Caco-2 (cell line): ENCODE measurements at regions of chr19 and their contacts with region 1.

Region 1: DNA sequence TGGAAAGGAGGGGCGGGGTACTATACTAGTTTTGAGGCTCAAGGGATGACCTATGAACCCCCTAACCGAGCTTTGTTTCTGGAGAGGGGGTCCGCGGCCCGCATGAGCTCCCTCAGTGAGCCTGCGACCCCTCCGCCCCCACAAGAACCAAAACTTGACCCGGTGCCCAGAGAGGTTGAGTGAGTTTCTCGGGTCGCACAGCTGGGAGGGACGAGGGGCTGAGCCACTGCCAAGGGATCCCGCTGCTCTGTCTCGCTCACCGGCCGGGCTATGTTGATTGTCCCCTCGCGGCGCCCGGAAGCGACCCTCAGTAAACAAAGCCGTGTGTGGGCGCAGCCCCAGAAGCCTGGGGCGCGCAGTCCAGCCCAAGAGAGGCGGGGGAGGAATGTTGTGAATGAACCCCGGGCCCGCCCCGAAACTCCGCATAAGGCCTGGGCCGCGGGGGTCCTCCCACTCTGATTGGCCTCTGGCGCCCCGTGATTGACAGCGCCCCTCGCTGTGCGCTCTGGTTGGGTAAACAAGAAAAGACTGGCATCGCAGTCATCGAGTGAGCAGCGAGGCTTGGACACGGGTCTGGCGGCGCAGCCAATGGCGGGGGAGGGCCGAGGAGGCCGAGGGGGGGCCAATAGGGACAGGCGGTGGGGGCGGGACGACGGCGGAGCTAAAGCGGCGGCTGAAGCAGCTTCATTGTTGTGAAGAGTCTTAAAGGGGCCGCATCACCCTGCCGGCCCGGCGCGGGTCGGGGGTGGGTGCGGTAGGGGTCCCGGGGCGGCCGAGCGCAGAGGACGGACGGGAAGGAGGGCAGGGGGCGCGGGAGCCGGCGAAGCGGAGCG is at the start of gene ZSWIM4:
- DNase-seq: peak; percentile 98 to 99
- H3K4me3 ChIP-seq: peak within 1 kb of the TSS; percentile 80
- H3K4me3 Mint-ChIP-seq: peak within 1 kb of the TSS; percentile 97
- H3K27ac Mint-ChIP-seq: peak within 1 kb of the TSS; percentile 99
- H3K4me1 ChIP-seq: no peaks in the 10 kb centered on the region
- H3K4me1 Mint-ChIP-seq: peaks cover 9% of the 10 kb centered on the region
- H3K27me3 ChIP-seq: no peaks in the 10 kb centered on the region
- H3K27me3 Mint-ChIP-seq: no peaks in the 10 kb centered on the region
- CTCF ChIP-seq: no peak
- total RNA-seq, gene ZSWIM4: 4.0 and 5.7 TPM in 2 replicates

Region 2: DNA sequence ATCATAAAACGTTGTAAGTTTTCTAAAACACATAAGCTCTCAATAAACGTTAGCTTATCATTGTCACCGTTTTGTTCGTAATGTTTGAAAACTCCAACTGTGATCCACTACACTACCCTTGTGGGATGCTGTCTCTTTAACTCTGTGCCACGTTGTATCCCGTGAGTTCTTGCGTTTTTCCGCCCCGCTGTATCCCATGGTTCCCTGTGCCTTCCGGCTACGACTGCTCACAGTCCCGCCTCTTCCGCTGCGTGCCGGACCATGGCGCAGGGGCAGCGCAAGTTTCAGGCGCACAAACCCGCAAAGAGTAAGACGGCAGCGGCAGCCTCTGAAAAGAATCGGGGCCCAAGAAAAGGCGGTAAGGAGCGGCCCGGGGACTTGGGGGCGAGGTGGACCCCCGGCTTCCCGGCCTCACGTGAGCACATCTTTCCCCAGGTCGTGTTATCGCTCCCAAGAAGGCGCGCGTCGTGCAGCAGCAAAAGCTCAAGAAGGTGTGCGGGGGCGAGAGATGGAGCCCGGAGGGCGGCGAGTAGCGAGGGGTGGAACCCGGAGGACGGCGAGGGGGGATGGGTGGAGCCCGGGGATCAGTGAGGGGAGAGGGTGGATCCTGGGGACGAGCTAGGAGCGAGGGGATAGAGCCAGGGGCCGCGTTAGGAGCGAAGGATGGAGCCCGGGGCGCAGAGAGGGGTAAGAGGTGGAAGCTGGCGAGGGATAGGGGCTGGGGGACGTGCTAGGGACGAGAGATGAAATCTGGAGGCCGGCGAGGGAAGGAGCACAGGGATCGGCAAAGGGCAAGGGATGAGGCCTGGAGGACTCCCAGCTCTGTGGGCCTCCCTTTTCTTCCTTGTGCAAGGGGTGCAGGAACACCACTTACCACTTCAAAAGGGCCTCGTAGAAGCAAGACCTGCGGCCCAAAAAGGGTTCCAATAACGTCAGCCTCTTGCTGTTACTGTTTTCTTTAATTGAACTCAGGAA is 20.5 kb before region 1 on chr19 and contains the start of gene C19orf53:
- CTCF ChIA-PET with region 1: no interaction called
- POLR2A ChIA-PET with region 1: no interaction called
- intact Hi-C with region 1: loop called (anchors 2 kb)
- DNase-seq: peak; percentile 87 to 89
- H3K4me3 ChIP-seq: peak within 1 kb of the TSS; percentile 99
- H3K4me3 Mint-ChIP-seq: peak within 1 kb of the TSS; percentile 93
- H3K27ac Mint-ChIP-seq: peak within 1 kb of the TSS; percentile 94
- H3K4me1 ChIP-seq: no peaks in the 10 kb centered on the region
- H3K4me1 Mint-ChIP-seq: peaks cover 8% of the 10 kb centered on the region
- H3K27me3 ChIP-seq: no peaks in the 10 kb centered on the region
- H3K27me3 Mint-ChIP-seq: no peaks in the 10 kb centered on the region
- CTCF ChIP-seq: no peak
- total RNA-seq, gene C19orf53: 107 and 113 TPM in 2 replicates

Region 3: DNA sequence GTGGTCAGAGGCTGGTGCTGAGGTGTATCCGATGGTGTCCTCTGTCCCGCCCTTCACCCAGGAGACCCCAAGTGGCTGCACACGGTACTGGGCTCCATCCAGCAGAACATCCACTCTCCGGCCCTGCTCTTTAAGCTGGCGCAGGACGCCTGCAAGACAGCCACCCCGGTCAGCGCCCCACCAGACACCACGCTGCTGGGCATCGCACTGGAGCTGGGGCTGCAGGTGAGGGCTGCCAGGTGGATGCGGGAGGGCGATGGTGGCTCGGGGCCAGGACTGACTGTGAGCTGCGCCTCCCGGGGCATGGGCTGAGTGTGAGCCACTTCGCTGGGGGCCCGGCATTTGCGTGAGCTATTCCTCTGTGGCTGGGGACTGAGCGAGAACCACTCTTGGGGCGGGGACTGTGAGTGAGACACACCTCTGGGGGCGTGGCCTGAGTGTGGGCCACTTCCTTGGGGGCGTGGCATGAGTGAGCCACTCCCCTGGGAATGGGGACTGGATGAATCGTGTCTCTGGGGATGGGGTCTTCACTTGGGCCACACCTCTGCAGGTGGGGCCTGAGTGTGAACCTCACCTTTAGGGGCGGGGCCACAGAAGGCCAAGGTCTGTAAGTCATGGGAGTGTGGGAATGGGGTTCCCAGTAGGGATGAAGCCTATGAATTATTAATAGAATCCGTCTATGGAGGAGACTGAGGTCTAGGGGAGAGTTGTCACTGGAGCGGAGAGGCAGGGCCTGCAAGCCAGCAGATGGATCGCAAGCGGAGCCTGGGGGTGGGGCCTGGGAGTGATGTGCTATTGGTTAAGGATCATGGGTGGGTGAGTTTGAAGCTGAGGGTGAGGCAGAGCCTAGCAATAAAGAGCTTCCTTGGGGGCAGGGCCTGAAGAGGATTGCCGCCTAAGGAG is 30.8 kb after region 1 on chr19:
- CTCF ChIA-PET with region 1: no interaction called
- POLR2A ChIA-PET with region 1: no interaction called
- intact Hi-C with region 1: no loop called
- DNase-seq: peak; percentile 43 to 57
- H3K4me3 ChIP-seq: no peak overlapping the region
- H3K4me3 Mint-ChIP-seq: no peak overlapping the region
- H3K27ac Mint-ChIP-seq: peak overlapping the region; percentile 61
- H3K4me1 ChIP-seq: peaks cover 4% of the 10 kb centered on the region; the same call in 1 of the 2 replicates
- H3K4me1 Mint-ChIP-seq: peaks cover 5% of the 10 kb centered on the region
- H3K27me3 ChIP-seq: no peaks in the 10 kb centered on the region
- H3K27me3 Mint-ChIP-seq: no peaks in the 10 kb centered on the region
- CTCF ChIP-seq: no peak

Region 4: GRCh38 chr19:13846557-13847406 is 51.8 kb after region 1 on chr19:
- CTCF ChIA-PET with region 1: interaction called, 5 read pairs
- POLR2A ChIA-PET with region 1: interaction called, 3 read pairs
- intact Hi-C with region 1: loop called (anchors 10 kb)
- DNase-seq: peak; percentile 91 to 92
- H3K4me3 ChIP-seq: peak overlapping the region; percentile 64
- H3K4me3 Mint-ChIP-seq: peak overlapping the region; percentile 66
- H3K27ac Mint-ChIP-seq: peak overlapping the region; percentile 93
- H3K4me1 ChIP-seq: peaks cover 55% of the 10 kb centered on the region
- H3K4me1 Mint-ChIP-seq: peaks cover 30% of the 10 kb centered on the region
- H3K27me3 ChIP-seq: no peaks in the 10 kb centered on the region
- H3K27me3 Mint-ChIP-seq: no peaks in the 10 kb centered on the region
- CTCF ChIP-seq: no peak